Activated CD4-positive, alpha-beta T cell treated with anti-CD3 and anti-CD28 coated beads, Interleukin-2, amount 10 ng/mL, durations not matched to agents 7 days and 5 days (primary cell): ENCODE measurements at regions of chr3 and their contacts with region 1.

Region 1: DNA sequence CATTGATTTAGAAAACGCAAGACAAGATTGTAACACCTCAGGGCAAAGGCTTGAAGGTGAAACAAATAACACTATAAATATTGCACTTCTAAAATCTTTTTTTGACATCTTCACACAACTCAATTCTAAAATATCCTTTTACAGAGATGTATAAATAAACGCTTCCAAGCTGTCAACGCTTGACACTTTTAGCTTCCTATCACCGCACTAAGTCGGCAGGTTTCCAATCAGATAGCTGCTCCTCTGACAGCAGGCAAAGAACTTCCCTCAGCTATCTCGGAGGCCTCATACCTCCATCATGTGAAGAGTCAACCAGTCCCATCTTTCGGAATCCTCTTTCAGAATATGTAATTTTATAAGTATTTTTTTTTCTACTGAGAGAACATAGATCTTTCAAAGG is 71.0 kb downstream of the PCOLCE2 start:
- DNase-seq: no peak
- H3K4me3 Mint-ChIP-seq: no peak overlapping the region
- H3K27ac Mint-ChIP-seq: no peak overlapping the region
- H3K4me1 Mint-ChIP-seq: no peaks in the 10 kb centered on the region
- H3K27me3 Mint-ChIP-seq: peaks cover 16% of the 10 kb centered on the region

Region 2: GRCh38 chr3:142828703-142829305 is 10.9 kb after region 1 on chr3:
- CTCF ChIA-PET with region 1: interaction called, 12 read pairs
- POLR2A ChIA-PET with region 1: no interaction called
- DNase-seq: peak; percentile 73
- H3K4me3 Mint-ChIP-seq: no peak overlapping the region
- H3K27ac Mint-ChIP-seq: no peak overlapping the region
- H3K4me1 Mint-ChIP-seq: no peaks in the 10 kb centered on the region
- H3K27me3 Mint-ChIP-seq: peaks cover 15% of the 10 kb centered on the region